PC-3 (cell line): ENCODE measurements at regions of chr11 and their contacts with region 1.

Region 1: GRCh38 chr11:77789061-77789730 is 31.3 kb downstream of the RSF1 start:
- DNase-seq: no peak
- ATAC-seq: no peak
- H3K4me3 ChIP-seq: no peak overlapping the region
- H3K27ac ChIP-seq: no peak overlapping the region
- H3K4me1 ChIP-seq: no peaks in the 10 kb centered on the region
- H3K27me3 ChIP-seq: no peaks in the 10 kb centered on the region
- CTCF ChIP-seq: no peak

Region 2: DNA sequence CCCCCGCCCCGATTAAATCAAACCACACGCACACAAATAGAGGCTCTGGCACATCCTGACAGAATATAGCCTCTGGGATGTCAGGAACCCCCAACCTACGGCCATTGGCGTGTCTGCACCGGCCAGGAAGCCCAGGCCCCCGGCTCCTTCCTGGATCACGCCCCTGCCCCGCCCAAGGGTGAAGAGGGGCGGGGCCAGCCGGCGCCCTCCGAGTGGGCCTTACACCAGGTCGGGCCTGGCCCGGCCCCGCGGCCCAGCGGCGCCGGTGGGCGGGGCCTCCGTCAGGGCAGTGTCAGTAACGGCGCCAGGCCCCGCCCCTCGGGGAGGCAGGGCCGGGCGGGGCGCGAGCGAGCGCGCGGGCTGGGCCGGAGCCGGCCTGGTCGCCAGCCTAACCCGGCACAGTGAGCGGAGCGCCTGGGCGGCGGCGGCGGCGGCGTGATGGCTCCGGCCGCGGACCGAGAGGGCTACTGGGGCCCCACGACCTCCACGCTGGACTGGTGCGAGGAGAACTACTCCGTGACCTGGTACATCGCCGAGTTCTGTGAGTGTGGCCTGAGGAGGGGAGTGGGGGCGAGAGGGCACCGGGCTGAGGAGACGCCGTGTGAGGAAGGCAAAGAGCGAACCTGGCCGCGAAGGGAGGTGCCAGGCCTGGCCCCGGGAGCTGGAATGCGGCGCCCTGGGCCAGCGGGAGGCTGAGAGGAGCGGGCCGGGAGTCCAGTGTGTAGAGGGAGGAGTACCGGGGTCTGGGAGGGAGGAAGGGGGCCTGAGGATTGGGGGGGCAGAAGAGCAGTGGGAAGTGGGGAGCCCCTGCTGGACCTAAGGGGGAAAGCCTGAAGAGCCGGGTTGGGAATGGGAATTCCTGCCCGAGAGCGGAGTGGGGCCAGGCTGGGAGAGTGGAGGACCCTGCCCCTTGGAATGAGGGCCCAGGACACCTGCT is 928.4 kb before region 1 on chr11 and contains the start of gene ACER3:
- CTCF ChIA-PET with region 1: interaction called, 10 read pairs
- POLR2A ChIA-PET with region 1: no interaction called
- intact Hi-C with region 1: no loop called
- DNase-seq: peak; percentile 98
- ATAC-seq: peak; percentile 95
- H3K4me3 ChIP-seq: peak within 1 kb of the TSS; percentile 93
- H3K27ac ChIP-seq: peak within 1 kb of the TSS; percentile 22; the same call in 1 of the 2 replicates
- H3K4me1 ChIP-seq: peaks cover 16% of the 10 kb centered on the region
- H3K27me3 ChIP-seq: no peaks in the 10 kb centered on the region
- CTCF ChIP-seq: peak; percentile 24; the same call in 1 of the 2 replicates
- total RNA-seq, gene ACER3: 17.3 and 18.5 TPM in 2 replicates

Region 3: GRCh38 chr11:77695417-77695816 is 93.8 kb before region 1 on chr11:
- CTCF ChIA-PET with region 1: no interaction called
- POLR2A ChIA-PET with region 1: no interaction called
- intact Hi-C with region 1: no loop called
- DNase-seq: no peak
- ATAC-seq: no peak
- H3K4me3 ChIP-seq: no peak overlapping the region
- H3K27ac ChIP-seq: no peak overlapping the region
- H3K4me1 ChIP-seq: no peaks in the 10 kb centered on the region; the same call in 1 of the 2 replicates
- H3K27me3 ChIP-seq: no peaks in the 10 kb centered on the region
- CTCF ChIP-seq: no peak

Region 4: GRCh38 chr11:77842441-77843121 is 53.4 kb after region 1 on chr11:
- CTCF ChIA-PET with region 1: no interaction called
- POLR2A ChIA-PET with region 1: interaction called, 10 read pairs
- intact Hi-C with region 1: no loop called
- DNase-seq: peak; percentile 43
- ATAC-seq: peak; percentile 27; the same call in 1 of the 2 replicates
- H3K4me3 ChIP-seq: no peak overlapping the region
- H3K27ac ChIP-seq: no peak overlapping the region
- H3K4me1 ChIP-seq: peaks cover 6% of the 10 kb centered on the region; the same call in 1 of the 2 replicates
- H3K27me3 ChIP-seq: no peaks in the 10 kb centered on the region
- CTCF ChIP-seq: no peak